WTC11 (cell line): ENCODE measurements at regions of chr11 and their contacts with region 1.

Region 1: DNA sequence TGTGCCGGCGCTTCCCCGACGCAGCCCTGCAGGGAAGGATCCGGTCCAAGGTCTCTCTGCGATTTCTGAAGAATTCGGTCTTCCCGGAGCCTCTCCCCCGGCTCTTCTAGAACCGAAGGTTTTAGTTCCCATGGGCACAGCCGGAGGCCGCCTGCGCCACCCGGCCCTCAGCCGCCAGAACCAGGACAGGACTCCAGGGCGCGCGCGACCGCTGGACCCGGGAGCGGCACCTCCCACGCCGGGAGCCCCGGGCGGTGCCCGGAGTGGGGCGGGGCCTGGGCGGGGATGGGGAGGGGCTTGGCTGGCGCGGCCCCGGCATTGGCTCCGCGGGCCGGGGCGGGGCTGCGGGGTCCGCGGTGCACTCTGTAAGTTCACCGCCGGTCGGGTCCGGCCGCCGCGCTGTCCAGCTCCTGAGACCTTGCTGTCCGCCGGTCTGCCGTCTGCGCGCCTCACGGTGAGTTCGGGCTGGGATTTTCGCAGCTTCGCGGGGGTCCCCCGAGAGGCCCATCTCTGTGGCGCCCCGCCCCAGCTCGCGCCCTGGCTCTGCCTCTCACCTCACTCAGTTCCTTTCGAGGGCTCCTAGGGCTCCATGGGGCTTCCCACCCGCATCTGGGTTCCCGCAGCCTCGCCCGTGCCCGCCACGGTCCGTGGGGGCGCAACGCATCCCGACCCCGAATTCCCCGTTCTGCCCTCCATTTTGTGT is at the start of gene CDC42EP2:
- DNase-seq: peak; percentile 87
- ATAC-seq: peak; percentile 78
- H3K4me3 Mint-ChIP-seq: peak within 1 kb of the TSS; percentile 71
- H3K27ac Mint-ChIP-seq: no peak within 1 kb of the TSS
- H3K4me1 Mint-ChIP-seq: peaks cover 39% of the 10 kb centered on the region
- H3K27me3 Mint-ChIP-seq: peaks cover 35% of the 10 kb centered on the region
- CTCF ChIP-seq: no peak
- total RNA-seq, gene CDC42EP2: 11.0 to 15.2 TPM (median 11.5 TPM) in 3 replicates

Region 2: GRCh38 chr11:64734811-64735724 is 579.6 kb before region 1 on chr11:
- CTCF ChIA-PET with region 1: no interaction called
- POLR2A ChIA-PET with region 1: no interaction called
- DNase-seq: no peak
- ATAC-seq: no peak
- H3K4me3 Mint-ChIP-seq: no peak overlapping the region
- H3K27ac Mint-ChIP-seq: no peak overlapping the region
- H3K4me1 Mint-ChIP-seq: peaks cover 31% of the 10 kb centered on the region
- H3K27me3 Mint-ChIP-seq: peaks cover 13% of the 10 kb centered on the region
- CTCF ChIP-seq: no peak

Region 3: DNA sequence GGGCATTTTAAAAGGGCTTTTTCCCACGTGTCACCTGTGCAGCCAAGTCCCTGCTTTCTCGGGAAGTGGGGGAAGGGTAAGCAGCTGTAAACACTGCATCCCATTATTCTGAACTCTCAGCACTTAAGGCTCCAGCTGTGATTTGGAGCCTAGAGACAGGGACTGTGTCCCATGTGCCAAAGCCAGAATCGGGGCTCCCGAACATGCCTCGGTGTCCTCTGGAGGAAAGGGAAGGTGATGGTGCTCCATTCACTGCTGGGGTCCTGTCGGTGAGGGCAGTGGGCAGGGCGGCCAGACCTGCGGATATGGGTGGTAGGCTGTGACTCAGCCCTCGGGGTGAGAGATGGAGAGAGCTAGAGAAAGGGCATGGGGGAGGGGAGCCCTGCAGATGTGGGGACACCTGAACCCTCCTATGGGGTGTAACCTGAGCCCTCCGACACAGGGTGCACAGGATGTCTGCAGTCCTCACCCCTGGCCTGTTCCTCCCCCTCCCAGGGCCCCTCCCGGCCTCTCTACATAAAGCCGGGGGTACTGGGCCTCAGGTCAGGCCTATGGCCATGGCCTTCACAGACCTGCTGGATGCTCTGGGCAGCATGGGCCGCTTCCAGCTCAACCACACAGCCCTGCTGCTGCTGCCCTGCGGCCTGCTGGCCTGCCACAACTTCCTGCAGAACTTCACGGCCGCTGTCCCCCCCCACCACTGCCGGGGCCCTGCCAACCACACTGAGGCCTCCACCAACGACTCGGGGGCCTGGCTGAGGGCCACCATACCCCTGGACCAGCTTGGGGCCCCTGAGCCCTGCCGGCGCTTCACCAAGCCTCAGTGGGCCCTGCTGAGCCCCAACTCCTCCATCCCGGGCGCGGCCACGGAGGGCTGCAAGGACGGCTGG is 101.1 kb before region 1 on chr11:
- CTCF ChIA-PET with region 1: interaction called, 15 read pairs
- POLR2A ChIA-PET with region 1: interaction called, 4 read pairs
- DNase-seq: peak; percentile 84
- ATAC-seq: peak; percentile 85
- H3K4me3 Mint-ChIP-seq: peak overlapping the region; percentile 58
- H3K27ac Mint-ChIP-seq: peak overlapping the region; percentile 100
- H3K4me1 Mint-ChIP-seq: peaks cover 42% of the 10 kb centered on the region
- H3K27me3 Mint-ChIP-seq: no peaks in the 10 kb centered on the region
- CTCF ChIP-seq: no peak

Region 4: GRCh38 chr11:65261591-65262380 is 52.9 kb before region 1 on chr11 and contains the start of gene POLA2:
- CTCF ChIA-PET with region 1: interaction called, 15 read pairs
- POLR2A ChIA-PET with region 1: interaction called, 13 read pairs
- DNase-seq: peak; percentile 88
- ATAC-seq: peak; percentile 92
- H3K4me3 Mint-ChIP-seq: peak within 1 kb of the TSS; percentile 92
- H3K27ac Mint-ChIP-seq: peak within 1 kb of the TSS; percentile 69
- H3K4me1 Mint-ChIP-seq: peaks cover 18% of the 10 kb centered on the region
- H3K27me3 Mint-ChIP-seq: peaks cover 13% of the 10 kb centered on the region
- CTCF ChIP-seq: no peak
- total RNA-seq, gene POLA2: 26.9 to 35.6 TPM (median 28.5 TPM) in 3 replicates

Region 5: DNA sequence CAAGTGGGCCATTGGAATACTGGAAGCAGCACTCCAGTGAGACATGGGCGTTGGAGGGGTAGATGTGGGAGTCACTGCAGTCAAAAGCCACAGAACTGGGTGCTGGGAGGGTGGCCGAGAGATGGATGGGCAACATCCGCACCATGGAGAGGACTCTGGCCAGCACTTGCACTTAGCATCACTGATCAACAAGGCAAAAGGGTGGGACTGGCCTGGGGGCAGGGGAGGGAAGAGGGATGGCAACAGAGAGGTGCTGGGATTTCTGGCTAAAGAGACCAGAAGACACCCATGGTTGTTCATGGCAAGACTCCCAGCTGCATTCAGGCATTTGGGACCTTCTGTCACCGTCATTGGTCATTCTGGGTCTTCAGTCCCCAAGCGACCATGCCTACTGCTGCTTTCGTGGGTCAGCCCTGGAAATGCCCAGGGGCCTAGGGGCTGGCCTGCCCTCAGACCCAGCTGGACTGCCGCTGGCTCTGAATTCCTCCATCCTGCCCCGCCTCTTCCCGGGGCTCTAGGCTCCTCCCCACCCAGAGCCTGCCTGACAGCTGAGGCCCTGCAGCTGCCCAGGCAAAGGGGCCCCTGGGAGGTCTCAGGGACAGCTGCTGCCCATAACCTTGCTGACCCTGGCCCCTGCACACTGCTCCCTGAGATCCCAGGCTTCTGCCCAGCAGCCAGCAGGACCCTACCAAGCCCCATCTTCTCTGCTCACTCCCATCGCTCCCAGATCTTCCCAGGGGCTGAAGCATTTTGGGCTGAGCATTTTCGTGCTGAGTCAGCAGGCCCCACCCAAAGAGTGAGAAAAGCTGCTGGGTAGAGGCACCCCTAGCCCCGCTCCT is 12.9 kb before region 1 on chr11:
- CTCF ChIA-PET with region 1: interaction called, 23 read pairs
- POLR2A ChIA-PET with region 1: interaction called, 6 read pairs
- DNase-seq: peak; percentile 71
- ATAC-seq: peak; percentile 92
- H3K4me3 Mint-ChIP-seq: no peak overlapping the region
- H3K27ac Mint-ChIP-seq: no peak overlapping the region; the same call in 1 of the 2 replicates
- H3K4me1 Mint-ChIP-seq: peaks cover 13% of the 10 kb centered on the region
- H3K27me3 Mint-ChIP-seq: no peaks in the 10 kb centered on the region
- CTCF ChIP-seq: no peak

Region 6: GRCh38 chr11:65338676-65339075 is 24.0 kb after region 1 on chr11:
- CTCF ChIA-PET with region 1: interaction called, 232 read pairs
- POLR2A ChIA-PET with region 1: interaction called, 8 read pairs
- DNase-seq: no peak
- ATAC-seq: no peak
- H3K4me3 Mint-ChIP-seq: no peak overlapping the region
- H3K27ac Mint-ChIP-seq: peak overlapping the region; percentile 28
- H3K4me1 Mint-ChIP-seq: peaks cover 13% of the 10 kb centered on the region
- H3K27me3 Mint-ChIP-seq: no peaks in the 10 kb centered on the region
- CTCF ChIP-seq: no peak

Region 7: DNA sequence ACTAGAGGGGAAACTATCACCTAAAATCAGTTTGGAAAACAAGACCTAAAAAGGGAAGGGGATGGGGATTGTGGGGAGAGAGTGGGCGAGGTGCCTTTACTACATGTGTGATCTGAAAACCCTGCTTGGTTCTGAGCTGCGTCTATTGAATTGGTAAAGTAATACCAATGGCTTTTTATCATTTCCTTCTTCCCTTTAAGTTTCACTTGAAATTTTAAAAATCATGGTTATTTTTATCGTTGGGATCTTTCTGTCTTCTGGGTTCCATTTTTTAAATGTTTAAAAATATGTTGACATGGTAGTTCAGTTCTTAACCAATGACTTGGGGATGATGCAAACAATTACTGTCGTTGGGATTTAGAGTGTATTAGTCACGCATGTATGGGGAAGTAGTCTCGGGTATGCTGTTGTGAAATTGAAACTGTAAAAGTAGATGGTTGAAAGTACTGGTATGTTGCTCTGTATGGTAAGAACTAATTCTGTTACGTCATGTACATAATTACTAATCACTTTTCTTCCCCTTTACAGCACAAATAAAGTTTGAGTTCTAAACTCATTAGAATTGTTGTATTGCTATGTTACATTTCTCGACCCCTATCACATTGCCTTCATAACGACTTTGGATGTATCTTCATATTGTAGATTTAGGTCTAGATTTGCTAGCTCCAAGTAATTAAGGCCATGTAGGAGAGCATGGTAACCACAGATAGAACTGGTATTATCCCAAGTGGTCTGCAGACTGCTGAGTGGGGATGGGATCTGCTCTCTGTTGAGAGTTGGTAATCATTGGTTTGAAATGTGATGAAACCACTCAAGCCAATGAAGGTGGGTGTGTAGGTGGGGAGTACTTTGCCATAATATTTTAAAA is 111.6 kb after region 1 on chr11:
- CTCF ChIA-PET with region 1: no interaction called
- POLR2A ChIA-PET with region 1: no interaction called
- DNase-seq: no peak
- ATAC-seq: no peak
- H3K4me3 Mint-ChIP-seq: peak overlapping the region; percentile 69
- H3K27ac Mint-ChIP-seq: peak overlapping the region; percentile 28
- H3K4me1 Mint-ChIP-seq: peaks cover 88% of the 10 kb centered on the region
- H3K27me3 Mint-ChIP-seq: no peaks in the 10 kb centered on the region
- CTCF ChIP-seq: no peak